ENCODE measurements at regions of chr16 and their contacts with region 1.

Region 1: DNA sequence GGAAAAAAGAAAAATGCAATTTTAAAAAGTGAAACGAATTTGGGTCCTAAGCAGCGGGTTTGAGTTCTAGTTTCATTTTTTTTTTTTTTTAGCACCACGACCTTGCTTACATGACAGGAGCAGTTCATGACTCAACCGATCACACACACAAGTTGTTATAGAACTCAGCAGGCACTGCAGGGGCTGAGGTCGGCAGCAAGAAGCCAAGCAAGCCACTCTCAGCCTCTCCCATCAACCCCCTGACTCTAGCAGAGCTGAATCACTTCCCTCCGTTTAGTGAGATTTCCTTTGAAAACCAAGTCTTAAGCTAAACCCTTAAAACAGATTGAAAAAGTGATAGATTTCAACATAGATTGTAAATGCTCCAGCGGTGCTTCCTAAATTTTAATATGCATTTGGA is 520.8 kb downstream of the HAPSTR1 start:
- ATAC-seq: no peak
- H3K4me3 ChIP-seq: no peak overlapping the region
- H3K27ac ChIP-seq: no peak overlapping the region
- H3K4me1 ChIP-seq: peaks cover 2 to 17% of the 10 kb centered on the region in 2 donors

Region 2: DNA sequence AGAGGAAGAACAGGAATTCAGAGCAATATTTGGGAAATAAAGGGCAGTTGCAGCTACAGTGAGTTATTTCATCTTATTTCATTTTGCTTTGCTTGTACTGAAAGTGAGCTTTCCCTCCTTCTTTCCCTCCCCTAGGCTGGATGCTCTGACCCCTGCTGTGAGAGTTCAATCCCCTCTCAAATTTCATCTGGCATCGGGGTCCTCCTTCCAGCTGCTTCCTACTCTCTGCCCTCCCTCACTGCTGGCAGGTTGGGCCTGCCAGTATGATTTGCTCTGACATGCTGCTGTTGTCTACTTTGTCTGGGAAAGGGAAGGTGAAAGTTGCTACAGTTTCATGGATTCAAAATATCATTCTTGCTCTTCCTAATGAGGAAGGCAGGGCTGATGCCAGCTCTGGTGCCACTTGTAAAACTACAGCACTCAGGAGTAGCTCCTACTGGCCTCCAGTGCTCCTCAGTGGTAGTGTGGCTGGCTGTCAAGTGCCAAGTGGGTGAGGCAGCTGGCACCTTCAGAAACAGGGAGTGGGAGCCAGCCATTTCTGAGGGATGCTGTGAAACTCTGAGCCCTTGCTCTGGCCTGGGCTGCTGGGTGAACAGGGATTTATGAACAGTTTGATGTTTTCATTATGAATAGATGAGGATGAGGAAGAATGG is 112.2 kb before region 1 on chr16:
- in situ Hi-C with region 1: loop called in 1 of 9 experiments (anchors 25 kb)
- ATAC-seq: no peak
- H3K4me3 ChIP-seq: no peak overlapping the region
- H3K27ac ChIP-seq: no peak overlapping the region
- H3K4me1 ChIP-seq: peaks cover 5 to 11% of the 10 kb centered on the region in 2 donors